Ascending aorta (tissue), 2 donors: ENCODE measurements at regions of chr1 and their contacts with region 1.

Region 1: GRCh38 chr1:117121776-117122697 is 488 bp upstream of the TRIM45 start:
- DNase-seq: peak; percentile 86 to 99
- H3K4me3 ChIP-seq: peak overlapping the region; percentile 73 to 90
- H3K27ac ChIP-seq: peak overlapping the region; percentile 86 to 88
- H3K4me1 ChIP-seq: peaks cover 3 to 5% of the 10 kb centered on the region in 2 donors
- H3K27me3 ChIP-seq: no peaks in the 10 kb centered on the region
- CTCF ChIP-seq: peak; percentile 66 to 86 (median 80)

Region 2: DNA sequence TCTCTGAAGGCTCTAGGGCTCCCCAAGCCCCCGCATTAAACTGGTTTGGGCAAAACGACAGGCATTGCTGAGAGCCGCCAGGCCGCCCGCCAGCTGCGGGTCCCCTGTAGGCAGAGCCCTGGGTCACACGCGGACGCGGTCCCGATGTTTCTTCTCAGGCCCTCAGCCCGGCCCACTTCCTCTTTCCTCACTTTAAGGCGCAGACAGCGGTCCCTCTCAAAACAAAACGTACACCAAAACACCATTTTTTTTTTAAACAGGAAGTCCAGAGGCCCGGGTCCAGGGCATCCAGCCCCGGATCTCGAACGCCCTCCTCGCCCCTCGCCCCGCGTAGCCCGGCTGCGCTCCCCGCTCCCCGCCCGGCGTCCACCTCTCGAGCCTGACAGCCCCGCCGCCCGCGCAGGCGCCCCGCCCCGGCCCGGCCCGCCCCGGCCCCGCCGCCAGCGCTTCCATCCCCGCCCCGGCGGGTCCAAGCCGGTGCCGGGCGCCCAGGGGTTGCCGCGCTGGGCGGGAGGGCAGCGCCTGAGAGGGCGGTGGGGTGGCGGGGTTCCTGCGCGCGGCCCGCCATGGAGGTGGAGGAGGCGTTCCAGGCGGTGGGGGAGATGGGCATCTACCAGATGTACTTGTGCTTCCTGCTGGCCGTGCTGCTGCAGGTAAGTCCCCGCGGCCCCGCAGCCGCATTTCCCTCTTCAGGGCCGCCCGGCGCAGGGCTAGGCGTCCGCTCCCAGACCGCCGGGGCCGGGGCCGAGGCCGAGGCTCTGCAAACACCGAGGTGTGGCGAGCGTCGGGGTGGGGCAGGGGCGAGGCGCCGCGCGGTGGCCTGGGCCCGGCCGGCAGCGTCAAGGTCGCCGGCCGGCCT is 1145.7 kb before region 1 on chr1 and contains the start of gene SLC22A15:
- intact Hi-C with region 1: loop called (anchors 5 kb)
- DNase-seq: peak; percentile 34 to 79
- H3K4me3 ChIP-seq: peak within 1 kb of the TSS; percentile 83 to 94
- H3K27ac ChIP-seq: peak within 1 kb of the TSS; percentile 74 to 79
- H3K4me1 ChIP-seq: no peaks in the 10 kb centered on the region
- H3K27me3 ChIP-seq: no peaks in the 10 kb centered on the region
- CTCF ChIP-seq: no peak
- total RNA-seq, gene SLC22A15: 5.6 TPM

Region 3: GRCh38 chr1:116570358-116571200 is 551.5 kb before region 1 on chr1 and contains the start of gene CD58:
- intact Hi-C with region 1: loop called (anchors 5 kb)
- DNase-seq: peak; percentile 55 to 95
- H3K4me3 ChIP-seq: peak within 1 kb of the TSS; percentile 91 to 92
- H3K27ac ChIP-seq: peak within 1 kb of the TSS; percentile 99 to 100
- H3K4me1 ChIP-seq: peaks cover 0 to 11% of the 10 kb centered on the region in 2 donors
- H3K27me3 ChIP-seq: no peaks in the 10 kb centered on the region
- CTCF ChIP-seq: peak; percentile 73 to 81 (median 78)
- total RNA-seq, gene CD58: 50.7 TPM

Region 4: GRCh38 chr1:117093870-117094621 is 28.0 kb before region 1 on chr1:
- intact Hi-C with region 1: loop called (anchors 1 kb)
- DNase-seq: peak in 1 of 2 donors; percentile 63
- H3K4me3 ChIP-seq: no peak overlapping the region
- H3K27ac ChIP-seq: peak overlapping the region; percentile 89 to 91
- H3K4me1 ChIP-seq: peaks cover 6 to 32% of the 10 kb centered on the region in 2 donors
- H3K27me3 ChIP-seq: no peaks in the 10 kb centered on the region
- CTCF ChIP-seq: peak; percentile 36 to 43 (median 41)